Activated CD8-positive, alpha-beta T cell treated with anti-CD3 and anti-CD28 coated beads, Interleukin-2, amount 10 ng/mL, durations not matched to agents 7 days and 5 days (primary cell): ENCODE measurements at regions of chr20 and their contacts with region 1.

Region 1: GRCh38 chr20:23420943-23421931 is at the start of gene NAPB:
- DNase-seq: peak; percentile 95
- ATAC-seq: peak; percentile 98
- H3K4me3 Mint-ChIP-seq: peak within 1 kb of the TSS; percentile 98
- H3K27ac Mint-ChIP-seq: peak within 1 kb of the TSS; percentile 92
- H3K4me1 Mint-ChIP-seq: peaks cover 68% of the 10 kb centered on the region
- H3K27me3 Mint-ChIP-seq: no peaks in the 10 kb centered on the region
- total RNA-seq, gene NAPB: 15.6 to 18.7 TPM

Region 2: GRCh38 chr20:23305098-23305497 is 116.1 kb before region 1 on chr20:
- CTCF ChIA-PET with region 1: no interaction called
- POLR2A ChIA-PET with region 1: no interaction called
- DNase-seq: no peak
- ATAC-seq: no peak
- H3K4me3 Mint-ChIP-seq: no peak overlapping the region
- H3K27ac Mint-ChIP-seq: no peak overlapping the region
- H3K4me1 Mint-ChIP-seq: no peaks in the 10 kb centered on the region
- H3K27me3 Mint-ChIP-seq: no peaks in the 10 kb centered on the region

Region 3: DNA sequence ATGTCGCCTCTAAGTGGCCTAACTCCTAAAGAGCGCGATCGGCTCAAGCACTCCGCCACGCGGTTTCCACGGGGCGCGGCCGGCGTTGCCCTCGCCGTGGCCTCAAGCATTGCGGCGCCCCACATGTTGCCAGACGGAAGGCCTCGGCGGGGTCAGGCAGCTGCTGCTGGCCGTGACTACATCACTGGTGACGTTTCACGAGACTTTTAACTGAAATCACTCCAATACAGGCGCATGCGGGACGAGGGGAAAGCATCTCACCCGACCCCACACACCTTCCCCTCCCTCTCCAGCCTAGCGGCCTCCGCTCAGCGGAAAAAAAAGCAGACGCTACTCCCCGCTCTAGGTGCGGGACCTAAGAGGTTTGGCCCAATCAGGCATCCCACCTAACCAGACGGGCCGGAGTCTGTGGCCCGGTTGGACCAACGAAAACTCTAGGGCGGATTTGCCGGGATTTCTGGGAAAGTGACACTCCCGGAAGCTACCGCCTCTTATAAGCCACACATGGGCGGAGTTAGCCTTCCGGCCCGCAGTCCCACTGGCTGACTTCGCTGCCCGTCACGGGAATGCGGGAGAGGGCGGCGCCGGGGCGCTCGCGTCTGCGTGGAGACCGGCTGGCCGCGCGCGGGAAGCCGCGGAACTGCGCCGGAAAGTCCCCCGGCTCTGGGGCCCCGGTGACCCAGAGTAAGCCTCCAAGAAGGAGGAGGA is 70.9 kb before region 1 on chr20 and contains the start of gene NXT1:
- CTCF ChIA-PET with region 1: interaction called, 64 read pairs
- POLR2A ChIA-PET with region 1: interaction called, 29 read pairs
- DNase-seq: peak; percentile 95
- ATAC-seq: peak; percentile 87
- H3K4me3 Mint-ChIP-seq: peak within 1 kb of the TSS; percentile 83
- H3K27ac Mint-ChIP-seq: peak within 1 kb of the TSS; percentile 100
- H3K4me1 Mint-ChIP-seq: peaks cover 34% of the 10 kb centered on the region
- H3K27me3 Mint-ChIP-seq: no peaks in the 10 kb centered on the region
- total RNA-seq, gene NXT1: 34.8 to 35.5 TPM

Region 4: GRCh38 chr20:23357767-23358591 is 63.3 kb before region 1 on chr20:
- CTCF ChIA-PET with region 1: interaction called, 22 read pairs
- POLR2A ChIA-PET with region 1: interaction called, 11 read pairs
- DNase-seq: peak; percentile 100
- ATAC-seq: peak; percentile 83
- H3K4me3 Mint-ChIP-seq: peak overlapping the region; percentile 92
- H3K27ac Mint-ChIP-seq: peak overlapping the region; percentile 98
- H3K4me1 Mint-ChIP-seq: peaks cover 40% of the 10 kb centered on the region
- H3K27me3 Mint-ChIP-seq: no peaks in the 10 kb centered on the region

Region 5: GRCh38 chr20:23379772-23380171 is 41.5 kb before region 1 on chr20:
- CTCF ChIA-PET with region 1: no interaction called
- POLR2A ChIA-PET with region 1: no interaction called
- DNase-seq: no peak
- ATAC-seq: no peak
- H3K4me3 Mint-ChIP-seq: no peak overlapping the region
- H3K27ac Mint-ChIP-seq: no peak overlapping the region
- H3K4me1 Mint-ChIP-seq: peaks cover 26% of the 10 kb centered on the region
- H3K27me3 Mint-ChIP-seq: no peaks in the 10 kb centered on the region

Region 6: GRCh38 chr20:23391707-23392310 is 29.4 kb before region 1 on chr20:
- CTCF ChIA-PET with region 1: interaction called, 10 read pairs
- POLR2A ChIA-PET with region 1: interaction called, 3 read pairs
- DNase-seq: no peak
- ATAC-seq: no peak
- H3K4me3 Mint-ChIP-seq: no peak overlapping the region
- H3K27ac Mint-ChIP-seq: peak overlapping the region; percentile 2
- H3K4me1 Mint-ChIP-seq: peaks cover 13% of the 10 kb centered on the region
- H3K27me3 Mint-ChIP-seq: no peaks in the 10 kb centered on the region

Region 7: DNA sequence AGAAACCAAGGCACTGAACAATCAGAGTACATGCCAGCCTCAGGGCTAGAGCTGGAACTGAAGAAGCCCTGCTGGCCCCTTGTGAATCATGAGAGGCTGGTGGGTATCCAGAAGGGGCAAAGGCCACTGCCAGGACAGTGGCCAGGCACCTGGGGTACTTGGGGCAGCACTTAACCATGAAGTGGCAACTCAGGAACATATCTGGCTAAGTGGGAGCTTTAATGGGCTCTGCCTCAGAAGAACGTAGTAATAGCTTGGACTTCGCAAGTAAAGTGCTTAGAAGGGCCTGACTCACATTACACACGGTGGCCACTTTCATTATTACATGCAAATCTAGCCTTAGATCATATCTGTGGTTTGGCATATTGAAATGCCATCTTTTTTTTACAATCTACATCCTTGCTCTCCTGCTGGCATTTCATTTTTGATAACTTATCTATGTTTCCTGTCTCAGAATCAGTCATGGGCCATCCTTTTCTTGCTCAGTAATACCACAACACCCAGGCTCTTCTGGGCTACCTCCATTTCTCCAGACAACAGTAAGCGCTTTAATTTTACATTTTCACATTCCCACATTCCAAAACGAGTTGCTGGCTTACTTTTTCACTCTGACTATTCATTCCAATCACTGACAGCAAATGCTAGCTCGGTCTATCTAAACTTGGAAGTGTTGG is 21.5 kb before region 1 on chr20:
- CTCF ChIA-PET with region 1: interaction called, 15 read pairs
- POLR2A ChIA-PET with region 1: interaction called, 9 read pairs
- DNase-seq: no peak
- ATAC-seq: peak; percentile 70
- H3K4me3 Mint-ChIP-seq: no peak overlapping the region
- H3K27ac Mint-ChIP-seq: peak overlapping the region; percentile 79
- H3K4me1 Mint-ChIP-seq: peaks cover 55% of the 10 kb centered on the region
- H3K27me3 Mint-ChIP-seq: no peaks in the 10 kb centered on the region

Region 8: GRCh38 chr20:23407781-23408464 is 13.3 kb before region 1 on chr20:
- CTCF ChIA-PET with region 1: interaction called, 11 read pairs
- POLR2A ChIA-PET with region 1: interaction called, 5 read pairs
- DNase-seq: no peak
- ATAC-seq: peak; percentile 69
- H3K4me3 Mint-ChIP-seq: no peak overlapping the region
- H3K27ac Mint-ChIP-seq: no peak overlapping the region
- H3K4me1 Mint-ChIP-seq: peaks cover 27% of the 10 kb centered on the region
- H3K27me3 Mint-ChIP-seq: no peaks in the 10 kb centered on the region